ENCODE measurements at regions of chr10 and their contacts with region 1.

Region 1: DNA sequence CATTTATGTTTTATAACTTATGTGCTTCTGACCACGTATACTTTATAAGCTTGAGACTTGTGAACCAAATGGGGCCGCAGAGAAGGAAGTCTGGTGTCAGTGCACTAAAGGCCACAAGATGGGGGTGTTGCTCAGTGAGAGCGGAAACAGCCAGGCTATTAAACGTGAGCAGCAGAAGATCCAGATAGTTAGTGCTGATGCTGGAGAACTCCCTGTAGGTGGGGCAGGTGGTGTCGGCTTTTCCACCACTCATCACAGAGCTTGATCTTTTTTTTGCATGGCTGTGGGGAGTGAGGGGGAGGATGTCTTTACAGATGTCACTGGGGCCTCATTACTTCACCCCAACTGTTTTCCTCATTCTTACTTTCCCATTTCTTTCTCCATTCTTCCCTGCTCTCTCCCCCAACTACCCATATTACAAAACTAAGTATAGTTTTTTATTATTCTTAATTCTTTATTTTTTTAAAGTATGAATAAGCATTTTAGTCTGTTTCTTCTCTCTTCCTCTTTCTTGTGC is 34.7 kb downstream of the ACADSB start:
- DNase-seq: peak; percentile 58 to 78
- ATAC-seq: peak; percentile 99
- H3K4me3 ChIP-seq: no peak overlapping the region
- H3K27ac ChIP-seq: no peak overlapping the region
- H3K4me1 ChIP-seq: no peaks in the 10 kb centered on the region
- CTCF ChIP-seq: peak; percentile 81
- EP300 ChIP-seq: no peak
- POLR2A ChIP-seq: no peak
- RAD21 ChIP-seq: peak; percentile 85 to 90

Region 2: GRCh38 chr10:122939856-122940543 is 103.5 kb before region 1 on chr10:
- CTCF ChIA-PET with region 1: no interaction called
- POLR2A ChIA-PET with region 1: no interaction called
- DNase-seq: no peak
- ATAC-seq: no peak
- H3K4me3 ChIP-seq: no peak overlapping the region
- H3K27ac ChIP-seq: no peak overlapping the region
- H3K4me1 ChIP-seq: no peaks in the 10 kb centered on the region
- CTCF ChIP-seq: no peak
- EP300 ChIP-seq: no peak
- POLR2A ChIP-seq: no peak
- RAD21 ChIP-seq: no peak

Region 3: DNA sequence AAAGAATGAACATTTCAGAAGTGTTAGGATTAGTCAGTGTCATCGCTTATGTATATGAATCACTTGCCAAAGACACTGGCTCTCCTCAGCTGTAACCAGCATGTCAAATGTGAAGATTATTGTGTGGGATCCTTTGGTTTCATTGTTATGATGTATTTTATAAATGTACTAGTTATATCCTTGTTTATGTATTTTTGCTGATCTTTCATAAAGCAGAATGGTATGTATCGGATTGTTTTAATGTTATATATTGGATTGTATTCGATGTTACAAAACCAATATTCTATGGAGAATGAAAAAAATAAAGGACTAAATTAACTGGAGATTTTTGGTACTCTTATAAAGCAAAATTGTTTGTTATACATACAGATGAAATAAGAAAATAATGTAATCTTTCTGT is 14.5 kb after region 1 on chr10:
- CTCF ChIA-PET with region 1: interaction called, 24 read pairs
- POLR2A ChIA-PET with region 1: no interaction called
- DNase-seq: no peak
- ATAC-seq: no peak
- H3K4me3 ChIP-seq: no peak overlapping the region
- H3K27ac ChIP-seq: no peak overlapping the region
- H3K4me1 ChIP-seq: no peaks in the 10 kb centered on the region
- CTCF ChIP-seq: no peak
- EP300 ChIP-seq: no peak
- POLR2A ChIP-seq: no peak
- RAD21 ChIP-seq: no peak

Region 4: DNA sequence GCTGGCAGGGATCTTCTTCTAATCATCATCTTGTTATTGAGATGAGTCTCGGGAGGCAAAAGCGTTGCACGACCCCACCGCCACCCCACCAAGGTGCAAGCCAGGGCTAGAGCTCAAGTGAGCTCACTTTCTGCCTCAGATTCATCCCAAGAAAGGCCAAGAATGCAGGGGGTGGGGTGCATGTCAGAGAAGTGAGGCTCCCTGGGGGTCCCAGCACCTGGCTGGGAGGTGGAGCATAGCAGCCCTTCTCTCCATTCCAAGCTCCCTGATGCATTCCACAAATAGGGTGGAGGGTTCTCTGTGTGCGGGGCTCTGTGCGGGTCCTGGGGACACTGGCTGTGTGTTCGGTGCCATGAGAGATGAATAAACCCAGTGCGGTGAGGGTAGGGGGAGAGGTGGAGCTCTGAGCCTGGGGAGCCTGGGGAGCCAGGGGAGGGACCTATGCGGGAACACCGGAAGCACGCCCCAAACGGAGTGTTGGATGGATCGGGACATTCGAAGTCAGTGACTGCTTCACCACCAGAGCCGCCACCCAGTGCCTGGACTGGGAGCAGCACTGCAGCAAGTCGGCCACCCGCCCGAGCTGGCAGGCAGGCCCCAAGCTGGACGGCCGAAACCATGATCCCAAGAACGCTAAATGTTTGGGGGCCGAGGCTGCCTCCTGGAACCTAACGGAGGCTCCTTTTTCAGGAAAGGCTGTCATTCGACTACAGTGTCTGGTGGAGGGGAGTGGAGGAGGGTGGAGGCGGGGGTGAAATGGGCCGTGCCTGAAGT is 74.4 kb after region 1 on chr10:
- CTCF ChIA-PET with region 1: interaction called, 14 read pairs
- POLR2A ChIA-PET with region 1: no interaction called
- DNase-seq: no peak
- ATAC-seq: no peak
- H3K4me3 ChIP-seq: no peak overlapping the region
- H3K27ac ChIP-seq: no peak overlapping the region
- H3K4me1 ChIP-seq: no peaks in the 10 kb centered on the region
- CTCF ChIP-seq: no peak
- EP300 ChIP-seq: no peak
- POLR2A ChIP-seq: no peak
- RAD21 ChIP-seq: no peak

Region 5: DNA sequence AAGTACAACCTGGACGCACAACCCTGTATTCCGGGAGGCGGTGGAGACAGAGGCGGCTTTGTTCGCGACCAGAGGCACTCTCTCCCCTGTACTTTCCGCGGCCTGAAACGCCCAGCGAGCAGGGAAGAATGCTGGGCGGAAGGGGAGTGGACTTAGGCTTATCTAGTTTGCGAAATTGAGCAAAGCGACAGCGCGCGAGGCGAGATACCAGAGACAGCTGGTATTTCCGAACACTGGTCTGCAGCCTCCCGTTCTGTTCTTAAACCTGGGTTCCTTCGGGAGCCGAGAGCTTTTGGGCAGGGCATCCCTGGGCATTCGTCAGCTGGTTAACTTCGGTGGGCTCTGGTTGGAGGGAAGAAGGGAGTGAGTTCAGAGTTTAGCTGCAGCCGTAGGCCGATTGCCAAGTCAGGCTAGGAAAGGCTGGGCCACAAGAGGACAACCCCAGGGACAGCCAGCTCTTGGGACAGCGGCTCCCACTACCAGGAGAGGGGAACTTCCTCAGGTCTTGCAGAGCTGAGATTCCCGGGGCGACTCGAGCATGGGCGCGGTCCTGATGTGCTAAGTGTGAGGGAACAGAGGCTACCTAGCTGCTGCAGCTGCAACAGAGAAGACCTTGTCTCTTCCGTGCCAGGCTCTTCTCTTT is 96.2 kb after region 1 on chr10:
- CTCF ChIA-PET with region 1: interaction called, 52 read pairs
- POLR2A ChIA-PET with region 1: no interaction called
- DNase-seq: peak; percentile 22 to 49
- ATAC-seq: peak; percentile 35 to 60; a peak in 5 of 6 replicates
- H3K4me3 ChIP-seq: peak overlapping the region; percentile 42
- H3K27ac ChIP-seq: 0 out of 6 replicates have a peak overlapping the region, but pooled peaks of 1 of the 2 experiments have one; percentile 6
- H3K4me1 ChIP-seq: peaks cover 28% of the 10 kb centered on the region; the same call in 2 of the 3 replicates
- CTCF ChIP-seq: no peak
- EP300 ChIP-seq: no peak
- POLR2A ChIP-seq: no peak
- RAD21 ChIP-seq: no peak

Region 6: GRCh38 chr10:123552760-123553554 is 509.5 kb after region 1 on chr10:
- CTCF ChIA-PET with region 1: interaction called, 130 read pairs
- POLR2A ChIA-PET with region 1: no interaction called
- DNase-seq: no peak
- ATAC-seq: no peak
- H3K4me3 ChIP-seq: no peak overlapping the region
- H3K27ac ChIP-seq: no peak overlapping the region
- H3K4me1 ChIP-seq: no peaks in the 10 kb centered on the region
- CTCF ChIP-seq: no peak
- EP300 ChIP-seq: no peak
- POLR2A ChIP-seq: no peak
- RAD21 ChIP-seq: no peak

Region 7: GRCh38 chr10:123862421-123863182 is 819.1 kb after region 1 on chr10:
- CTCF ChIA-PET with region 1: no interaction called
- POLR2A ChIA-PET with region 1: no interaction called
- DNase-seq: no peak
- ATAC-seq: no peak
- H3K4me3 ChIP-seq: no peak overlapping the region
- H3K27ac ChIP-seq: no peak overlapping the region
- H3K4me1 ChIP-seq: no peaks in the 10 kb centered on the region
- CTCF ChIP-seq: no peak
- EP300 ChIP-seq: no peak
- POLR2A ChIP-seq: no peak
- RAD21 ChIP-seq: no peak